ENCODE measurements at regions of chr3 and their contacts with region 1.

Region 1: GRCh38 chr3:12841149-12841970 is at the start of gene RPL32:
- DNase-seq: peak; percentile 96
- ATAC-seq: peak; percentile 82
- H3K4me3 ChIP-seq: peak within 1 kb of the TSS; percentile 99
- H3K27ac ChIP-seq: peak within 1 kb of the TSS; percentile 55
- H3K4me1 ChIP-seq: peaks cover 30% of the 10 kb centered on the region
- H3K27me3 ChIP-seq: no peaks in the 10 kb centered on the region
- CTCF ChIP-seq: peak; percentile 87
- total RNA-seq, gene RPL32: 2,037 and 2,663 TPM in 2 replicates

Region 2: GRCh38 chr3:12791430-12791829 is 49.9 kb before region 1 on chr3:
- CTCF ChIA-PET with region 1: interaction called, 5 read pairs
- POLR2A ChIA-PET with region 1: no interaction called
- intact Hi-C with region 1: loop called (anchors 2 kb)
- DNase-seq: peak; percentile 28
- ATAC-seq: peak; percentile 82
- H3K4me3 ChIP-seq: no peak overlapping the region
- H3K27ac ChIP-seq: no peak overlapping the region
- H3K4me1 ChIP-seq: 0 out of 2 replicates have a peak, but pooled peaks cover 6% of the 10 kb centered on the region
- H3K27me3 ChIP-seq: no peaks in the 10 kb centered on the region
- CTCF ChIP-seq: no peak

Region 3: DNA sequence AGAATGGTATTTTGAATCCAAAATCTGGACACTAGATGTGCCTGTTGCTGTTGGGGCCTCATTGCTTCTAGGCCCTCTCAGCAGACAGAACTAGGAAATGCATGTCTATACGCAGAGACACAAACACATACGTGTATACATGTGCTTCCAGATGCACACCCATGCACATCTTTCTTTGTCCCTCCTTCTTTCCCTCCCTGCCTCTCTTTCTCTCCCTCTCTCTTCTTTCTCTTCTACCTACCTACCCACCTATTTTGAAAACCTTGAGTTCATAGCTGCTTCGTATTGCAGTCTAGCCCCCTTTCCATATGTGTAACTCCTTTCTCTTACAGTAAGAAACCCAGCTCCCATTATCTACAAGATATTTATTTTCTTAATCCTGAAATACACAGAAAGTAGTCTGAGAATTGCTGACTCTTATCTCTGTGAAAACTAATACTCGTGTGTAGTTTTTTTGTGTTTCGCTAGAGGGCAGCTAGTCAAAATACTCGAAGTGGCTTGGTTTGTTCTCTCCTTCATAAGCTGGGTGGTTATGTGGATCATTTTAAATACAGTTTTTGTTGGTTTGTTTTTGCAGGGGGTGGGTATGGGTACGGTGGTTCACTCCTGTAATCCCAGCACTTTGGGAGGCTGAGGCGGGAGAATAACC is 18.5 kb before region 1 on chr3:
- CTCF ChIA-PET with region 1: interaction called, 10 read pairs
- POLR2A ChIA-PET with region 1: interaction called, 5 read pairs
- intact Hi-C with region 1: no loop called
- DNase-seq: peak; percentile 73
- ATAC-seq: peak; percentile 84
- H3K4me3 ChIP-seq: no peak overlapping the region
- H3K27ac ChIP-seq: no peak overlapping the region
- H3K4me1 ChIP-seq: no peaks in the 10 kb centered on the region
- H3K27me3 ChIP-seq: no peaks in the 10 kb centered on the region
- CTCF ChIP-seq: peak; percentile 63

Region 4: GRCh38 chr3:12830785-12831156 is 10.6 kb before region 1 on chr3:
- CTCF ChIA-PET with region 1: interaction called, 6 read pairs
- POLR2A ChIA-PET with region 1: interaction called, 7 read pairs
- intact Hi-C with region 1: loop called (anchors 1 kb)
- DNase-seq: peak; percentile 34
- ATAC-seq: peak; percentile 0; the same call in 1 of the 2 replicates
- H3K4me3 ChIP-seq: peak overlapping the region; percentile 25; the same call in 1 of the 2 replicates
- H3K27ac ChIP-seq: peak overlapping the region; percentile 94
- H3K4me1 ChIP-seq: peaks cover 42% of the 10 kb centered on the region
- H3K27me3 ChIP-seq: no peaks in the 10 kb centered on the region
- CTCF ChIP-seq: 0 out of 2 replicates have a peak, but pooled peaks have one; percentile 18

Measured in PC-3 (cell line).